ENCODE measurements at regions of chr2 and their contacts with region 1.

Region 1: GRCh38 chr2:171102802-171103201 is 57.9 kb downstream of the TLK1 start:
- DNase-seq: no peak
- ATAC-seq: peak; percentile 57
- H3K4me3 Mint-ChIP-seq: no peak overlapping the region
- H3K27ac Mint-ChIP-seq: peak overlapping the region; percentile 59
- H3K4me1 Mint-ChIP-seq: peaks cover 44% of the 10 kb centered on the region
- H3K27me3 Mint-ChIP-seq: no peaks in the 10 kb centered on the region

Region 2: GRCh38 chr2:171141320-171141719 is 38.5 kb after region 1 on chr2:
- CTCF ChIA-PET with region 1: no interaction called
- POLR2A ChIA-PET with region 1: no interaction called
- intact Hi-C with region 1: loop called in 1 of 2 experiments (anchors 5 kb)
- DNase-seq: no peak
- ATAC-seq: peak; percentile 73
- H3K4me3 Mint-ChIP-seq: no peak overlapping the region
- H3K27ac Mint-ChIP-seq: peak overlapping the region; percentile 6
- H3K4me1 Mint-ChIP-seq: peaks cover 84% of the 10 kb centered on the region
- H3K27me3 Mint-ChIP-seq: no peaks in the 10 kb centered on the region